ENCODE measurements at regions of chr3 and their contacts with region 1.

Region 1: DNA sequence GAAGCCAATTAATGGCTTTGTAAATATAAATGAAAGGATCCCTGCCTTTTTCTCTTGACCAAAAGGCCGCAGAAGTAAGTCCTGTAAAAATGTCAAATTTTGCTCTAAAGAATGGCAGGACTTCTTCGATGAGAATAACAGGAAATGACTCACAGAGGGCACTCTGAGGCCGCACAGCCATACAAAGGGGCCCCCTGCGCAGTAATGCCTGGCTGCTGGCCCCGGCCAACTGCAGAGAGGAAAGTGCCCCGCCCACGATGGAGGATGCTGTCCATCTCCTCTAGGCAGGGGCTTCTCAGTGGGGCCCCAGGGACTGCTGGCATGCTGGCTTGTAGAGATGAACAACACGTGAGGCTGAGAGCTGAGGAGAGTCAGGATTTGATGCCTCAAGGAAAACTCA is 18.1 kb upstream of the SCN10A start:
- DNase-seq: peak; percentile 95
- H3K4me3 ChIP-seq: no peak overlapping the region
- H3K27ac ChIP-seq: peak overlapping the region; percentile 86
- H3K4me1 ChIP-seq: peaks cover 44% of the 10 kb centered on the region
- H3K27me3 ChIP-seq: no peaks in the 10 kb centered on the region
- CTCF ChIP-seq: no peak
- POLR2A ChIP-seq: peak; percentile 33

Region 2: DNA sequence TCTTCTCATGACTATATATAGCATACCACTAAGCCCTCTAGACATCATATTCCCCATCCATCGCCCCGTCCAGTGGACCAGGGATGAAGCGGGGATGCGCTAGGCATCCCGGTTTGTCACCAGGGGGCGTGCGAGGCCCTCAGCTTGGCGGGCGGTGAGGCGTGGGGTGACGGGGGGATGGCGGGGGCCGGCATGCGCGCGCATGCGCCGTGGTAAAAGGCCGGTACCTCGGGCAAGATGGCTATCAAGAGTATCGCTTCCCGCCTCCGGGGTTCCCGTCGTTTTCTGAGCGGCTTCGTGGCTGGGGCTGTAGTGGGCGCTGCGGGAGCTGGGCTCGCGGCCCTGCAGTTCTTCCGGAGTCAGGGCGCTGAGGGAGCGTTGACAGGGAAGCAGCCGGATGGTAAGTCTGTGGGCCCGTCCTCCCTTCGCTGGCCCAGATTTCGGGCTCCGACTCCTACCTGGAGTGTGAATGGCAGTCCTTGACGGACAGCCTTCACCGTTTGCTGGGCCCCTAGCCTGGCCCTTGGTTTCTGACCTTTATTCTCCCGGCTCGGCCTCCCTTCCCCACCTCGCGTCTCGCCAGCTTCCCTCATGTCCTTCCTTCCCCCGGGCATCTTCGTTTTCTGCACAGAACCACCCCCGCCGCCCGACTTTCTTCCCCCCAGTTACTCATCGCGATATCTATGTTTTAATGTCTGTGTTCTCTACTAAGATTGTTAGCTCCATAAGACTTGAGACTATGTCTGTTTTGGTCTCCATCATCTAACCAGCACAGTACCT is 337.8 kb before region 1 on chr3 and contains the start of gene EXOG:
- CTCF ChIA-PET with region 1: no interaction called
- POLR2A ChIA-PET with region 1: no interaction called
- dilution Hi-C with region 1: no loop called
- intact Hi-C with region 1: no loop called
- DNase-seq: peak; percentile 93
- H3K4me3 ChIP-seq: peak within 1 kb of the TSS; percentile 73 to 84 (median 80)
- H3K27ac ChIP-seq: peak within 1 kb of the TSS; percentile 4
- H3K4me1 ChIP-seq: peaks cover 7% of the 10 kb centered on the region
- H3K27me3 ChIP-seq: no peaks in the 10 kb centered on the region
- CTCF ChIP-seq: peak; percentile 84 to 94
- POLR2A ChIP-seq: peak; percentile 77
- total RNA-seq, gene EXOG: 21.8 and 21.9 TPM in 2 replicates

Region 3: DNA sequence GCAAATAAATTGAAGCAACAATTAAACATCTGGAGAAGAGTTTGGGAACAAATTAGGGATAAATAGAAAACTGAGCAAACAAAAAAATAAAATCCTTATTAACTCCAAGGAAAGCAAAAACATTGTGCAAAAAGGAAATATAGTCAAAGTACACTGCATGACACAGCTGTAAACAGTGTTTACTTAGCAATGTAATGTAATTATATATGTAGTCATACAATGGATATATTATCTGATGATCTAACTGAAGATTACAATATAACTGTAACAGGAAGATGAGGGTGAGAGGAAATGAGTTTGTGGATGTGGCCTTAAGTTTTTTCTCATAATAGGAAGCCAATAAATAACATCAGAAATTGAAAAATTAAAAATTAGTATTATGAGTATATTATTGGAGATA is 60.6 kb before region 1 on chr3:
- CTCF ChIA-PET with region 1: no interaction called
- POLR2A ChIA-PET with region 1: no interaction called
- dilution Hi-C with region 1: no loop called
- intact Hi-C with region 1: loop called (anchors 2 kb)
- DNase-seq: peak; percentile 53
- H3K4me3 ChIP-seq: no peak overlapping the region
- H3K27ac ChIP-seq: peak overlapping the region; percentile 60
- H3K4me1 ChIP-seq: peaks cover 17% of the 10 kb centered on the region
- H3K27me3 ChIP-seq: no peaks in the 10 kb centered on the region
- CTCF ChIP-seq: no peak
- POLR2A ChIP-seq: no peak

Region 4: DNA sequence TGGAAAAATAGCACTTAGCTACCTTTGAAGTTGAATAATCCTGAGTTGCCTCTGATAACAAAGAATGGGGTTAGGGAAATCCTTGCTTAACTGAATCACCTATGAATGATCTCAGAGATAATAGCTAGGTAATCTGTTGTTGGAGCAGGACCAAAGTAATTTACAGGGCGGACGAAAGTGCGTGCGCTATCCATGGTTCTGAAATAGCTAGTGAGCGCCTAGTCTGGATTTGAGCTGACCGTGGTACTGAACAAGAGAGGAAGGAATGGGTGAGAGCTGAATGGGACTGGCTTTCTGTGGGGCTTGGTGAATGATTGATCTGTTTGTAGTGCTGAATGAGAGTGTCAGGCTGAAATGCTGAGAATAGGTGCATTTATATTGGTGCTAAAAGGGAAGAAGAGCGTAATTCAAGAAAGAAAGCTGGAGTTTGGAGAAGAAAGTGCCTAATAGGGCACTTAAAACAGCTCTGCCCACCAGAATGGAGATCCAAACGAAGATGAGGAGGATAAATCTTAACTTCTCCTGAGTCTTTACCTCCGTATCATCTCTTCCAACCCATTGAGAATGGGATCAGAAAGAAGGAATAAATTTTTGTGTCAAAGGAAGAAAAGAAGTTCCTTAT is 28.2 kb before region 1 on chr3:
- CTCF ChIA-PET with region 1: interaction called, 7 read pairs
- POLR2A ChIA-PET with region 1: no interaction called
- dilution Hi-C with region 1: no loop called
- intact Hi-C with region 1: loop called (anchors 2 kb)
- DNase-seq: peak; percentile 74
- H3K4me3 ChIP-seq: no peak overlapping the region
- H3K27ac ChIP-seq: no peak overlapping the region
- H3K4me1 ChIP-seq: no peaks in the 10 kb centered on the region
- H3K27me3 ChIP-seq: peaks cover 0 to 7% of the 10 kb centered on the region in 2 experiments
- CTCF ChIP-seq: no peak
- POLR2A ChIP-seq: no peak

Measured in endothelial cell of umbilical vein (primary cell).